G401 (cell line): ENCODE measurements at regions of chr1 and their contacts with region 1.

Region 1: DNA sequence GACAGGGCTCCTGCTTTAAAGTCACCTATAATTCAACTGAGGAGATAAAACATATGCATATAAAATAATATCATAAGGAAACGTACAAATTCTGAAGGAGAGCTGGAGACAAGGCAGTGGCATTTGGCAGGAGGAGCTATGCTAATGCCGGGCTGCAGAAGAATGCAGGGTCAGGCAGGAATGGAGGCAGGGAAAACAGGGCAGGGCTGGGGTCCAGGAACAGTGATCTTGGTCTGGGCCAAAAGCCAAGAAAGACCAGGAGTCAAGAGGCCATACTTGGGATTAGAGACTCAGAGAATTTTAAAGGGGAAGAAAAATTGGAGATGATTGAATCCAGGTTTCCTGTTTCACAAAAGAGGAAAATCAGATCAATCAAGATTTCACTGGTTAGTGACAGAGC is 20.0 kb upstream of the BRDT start:
- DNase-seq: peak; percentile 25

Region 2: GRCh38 chr1:91529856-91530255 is 399.4 kb before region 1 on chr1:
- in situ Hi-C with region 1: loop called (anchors 25 kb)
- DNase-seq: no peak

Region 3: DNA sequence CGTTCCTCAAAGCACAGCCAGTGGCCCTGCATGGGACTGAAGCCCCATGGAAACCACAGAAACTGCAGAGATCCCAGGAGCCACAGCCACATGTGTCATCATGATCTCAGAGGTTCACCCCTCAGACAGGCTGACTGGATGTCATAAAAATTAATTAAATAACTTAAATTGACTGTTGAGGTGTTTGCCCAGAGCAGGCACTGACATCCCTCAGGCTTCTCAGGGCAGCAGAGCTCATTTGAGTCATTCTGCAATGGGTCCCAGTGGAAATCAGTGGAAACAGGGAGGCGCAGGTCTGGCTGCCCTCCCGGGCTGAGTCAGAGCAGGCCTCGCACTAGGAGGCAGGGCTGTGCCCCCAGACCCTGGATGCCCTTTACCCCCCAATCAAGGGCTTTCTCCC is 293.5 kb before region 1 on chr1:
- in situ Hi-C with region 1: no loop called
- DNase-seq: no peak

Region 4: GRCh38 chr1:92424381-92424780 is 495.1 kb after region 1 on chr1:
- in situ Hi-C with region 1: no loop called
- DNase-seq: no peak